GM23248 (cell line): ENCODE measurements at regions of chr3 and their contacts with region 1.

Region 1: DNA sequence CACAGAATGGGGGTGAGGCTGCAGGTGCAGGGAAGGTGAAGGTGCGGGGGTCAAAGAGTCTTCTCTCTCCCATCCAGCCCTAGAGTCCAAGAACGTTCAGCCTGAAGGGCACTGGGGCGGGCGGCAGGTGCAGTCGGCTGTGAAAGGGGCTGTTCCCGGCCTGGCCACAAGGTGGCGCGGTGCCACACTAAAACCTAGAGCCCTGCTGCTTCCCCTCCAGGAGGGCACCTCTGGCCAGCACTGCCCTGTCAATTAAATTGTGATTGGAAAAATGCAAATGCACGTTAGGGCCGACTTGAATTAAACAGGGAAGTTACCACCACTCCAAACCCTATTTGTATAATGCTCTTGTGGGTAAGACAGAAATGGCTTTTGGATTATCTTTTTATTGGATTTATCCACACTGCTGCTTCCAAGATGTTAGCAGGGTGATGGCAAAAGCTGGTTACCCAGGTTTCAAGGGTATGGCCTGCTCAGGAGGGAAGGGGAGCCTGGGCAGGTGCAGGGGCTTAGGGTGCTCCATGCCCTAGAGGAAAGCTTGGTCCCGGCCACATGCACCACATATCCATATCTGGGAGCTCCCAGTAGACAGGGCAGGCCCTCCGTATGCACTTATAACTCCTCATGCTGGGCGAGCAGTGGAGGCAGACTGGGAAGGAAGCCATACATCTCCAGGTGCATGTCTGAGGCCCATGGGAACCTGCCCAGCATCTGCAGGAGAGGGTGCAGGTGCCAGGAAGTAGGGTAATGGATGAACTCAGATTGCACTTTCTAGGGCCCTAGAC is 119.8 kb downstream of the ADCY5 start:
- DNase-seq: peak; percentile 69
- H3K4me3 ChIP-seq: no peak overlapping the region
- H3K27ac ChIP-seq: no peak overlapping the region
- H3K4me1 ChIP-seq: no peaks in the 10 kb centered on the region
- H3K27me3 ChIP-seq: peaks cover 9% of the 10 kb centered on the region; the same call in 1 of the 2 replicates

Region 2: GRCh38 chr3:123449102-123449996 is 120.3 kb after region 1 on chr3:
- in situ Hi-C with region 1: no loop called
- DNase-seq: peak; percentile 50
- H3K4me3 ChIP-seq: peak overlapping the region; percentile 72
- H3K27ac ChIP-seq: no peak overlapping the region
- H3K4me1 ChIP-seq: no peaks in the 10 kb centered on the region
- H3K27me3 ChIP-seq: peaks cover 62% of the 10 kb centered on the region

Region 3: DNA sequence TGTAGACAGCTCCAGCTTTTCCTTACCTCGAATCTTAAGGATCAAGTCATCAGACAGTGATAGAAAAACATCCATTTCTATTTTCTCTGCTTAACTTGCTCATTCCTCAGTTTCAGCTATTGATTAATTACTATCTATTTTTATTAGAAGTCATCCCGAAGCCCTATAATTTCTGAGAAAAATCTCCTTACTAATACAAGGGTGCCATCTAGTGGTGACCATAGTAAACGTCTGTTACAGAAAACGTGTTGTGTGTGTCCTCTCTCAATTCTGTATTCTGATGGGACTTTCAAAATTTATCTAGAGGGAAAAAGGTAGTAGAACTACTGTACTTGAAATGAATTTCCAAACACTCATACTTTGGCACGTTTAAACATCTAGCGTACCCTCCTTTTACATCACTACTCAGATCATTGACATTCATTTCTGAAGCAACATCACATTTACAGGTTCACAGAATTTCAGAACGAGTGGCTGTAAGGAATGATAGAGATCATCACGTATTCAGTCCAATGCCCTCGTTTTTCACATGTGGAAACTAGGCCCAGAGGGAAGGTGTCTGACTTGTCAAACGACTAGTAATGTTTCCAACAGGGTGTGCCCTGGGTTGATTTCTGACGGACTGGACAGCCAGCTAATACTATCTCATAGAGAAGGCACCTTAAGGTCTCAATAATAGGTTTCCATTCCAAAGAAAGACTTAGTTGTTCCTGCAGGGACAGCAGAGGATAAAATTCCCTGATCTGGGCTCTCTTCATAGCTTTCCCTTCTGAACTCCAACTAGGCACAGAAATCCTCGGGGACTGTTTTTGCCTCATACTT is 230.2 kb after region 1 on chr3:
- in situ Hi-C with region 1: loop called (anchors 5 kb)
- DNase-seq: peak; percentile 77
- H3K4me3 ChIP-seq: no peak overlapping the region
- H3K27ac ChIP-seq: no peak overlapping the region
- H3K4me1 ChIP-seq: no peaks in the 10 kb centered on the region
- H3K27me3 ChIP-seq: no peaks in the 10 kb centered on the region